Activated CD4-positive, alpha-beta T cell treated with anti-CD3 and anti-CD28 coated beads for 36 hours (primary cell): ENCODE measurements at regions of chr17 and their contacts with region 1.

Region 1: DNA sequence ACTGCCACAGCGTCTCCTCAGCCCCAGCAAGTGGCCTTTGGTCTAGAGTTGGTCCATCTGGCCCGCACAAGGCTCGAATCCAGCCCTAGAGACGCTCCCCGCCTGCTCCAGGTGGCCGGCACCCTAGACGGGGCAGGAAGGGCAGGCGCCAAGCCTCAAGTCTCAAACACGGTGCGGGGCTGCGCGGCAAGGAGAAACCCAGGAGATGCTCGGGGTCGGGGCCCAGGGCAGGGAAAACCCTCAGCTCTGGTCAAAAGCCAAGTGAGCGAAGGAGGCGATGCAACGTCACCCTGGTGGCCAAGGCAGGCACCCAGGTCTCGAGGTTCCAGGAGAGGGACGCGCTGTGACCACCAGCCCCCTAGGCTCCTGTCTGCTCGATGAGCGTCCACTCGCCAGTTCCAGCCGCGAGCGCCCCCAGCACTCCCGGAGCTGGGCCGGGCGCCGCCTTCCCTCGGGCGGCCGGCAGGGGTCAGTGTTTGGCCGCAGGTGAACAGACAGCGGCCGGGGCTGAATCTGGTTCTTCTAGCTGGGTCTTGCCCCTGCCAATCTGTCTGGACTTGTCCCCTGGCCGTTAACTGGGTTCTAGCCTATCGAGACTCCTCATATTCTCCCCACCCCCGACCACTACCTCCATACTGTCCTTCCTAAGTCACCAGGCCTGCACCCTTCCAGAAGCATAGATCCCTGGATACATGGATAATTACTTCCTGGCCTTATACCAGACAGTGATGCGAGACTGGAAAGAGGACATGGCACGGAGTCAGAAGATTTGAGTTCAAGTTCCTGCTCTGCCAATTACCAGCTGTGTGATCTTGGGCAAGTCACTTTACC is 44.0 kb downstream of the PRAC1 start:
- DNase-seq: peak; percentile 84
- ATAC-seq: peak; percentile 92
- H3K4me3 Mint-ChIP-seq: no peak overlapping the region
- H3K27ac Mint-ChIP-seq: no peak overlapping the region
- H3K4me1 Mint-ChIP-seq: no peaks in the 10 kb centered on the region
- H3K27me3 Mint-ChIP-seq: peaks cover 34% of the 10 kb centered on the region

Region 2: GRCh38 chr17:47970704-47971463 is 707.5 kb before region 1 on chr17 and contains the start of gene CDK5RAP3:
- CTCF ChIA-PET with region 1: no interaction called
- POLR2A ChIA-PET with region 1: no interaction called
- intact Hi-C with region 1: no loop called
- DNase-seq: peak; percentile 100
- ATAC-seq: peak; percentile 100
- H3K4me3 Mint-ChIP-seq: peak within 1 kb of the TSS; percentile 97
- H3K27ac Mint-ChIP-seq: peak within 1 kb of the TSS; percentile 94
- H3K4me1 Mint-ChIP-seq: peaks cover 21% of the 10 kb centered on the region
- H3K27me3 Mint-ChIP-seq: no peaks in the 10 kb centered on the region
- total RNA-seq, gene CDK5RAP3: 147 to 156 TPM

Region 3: DNA sequence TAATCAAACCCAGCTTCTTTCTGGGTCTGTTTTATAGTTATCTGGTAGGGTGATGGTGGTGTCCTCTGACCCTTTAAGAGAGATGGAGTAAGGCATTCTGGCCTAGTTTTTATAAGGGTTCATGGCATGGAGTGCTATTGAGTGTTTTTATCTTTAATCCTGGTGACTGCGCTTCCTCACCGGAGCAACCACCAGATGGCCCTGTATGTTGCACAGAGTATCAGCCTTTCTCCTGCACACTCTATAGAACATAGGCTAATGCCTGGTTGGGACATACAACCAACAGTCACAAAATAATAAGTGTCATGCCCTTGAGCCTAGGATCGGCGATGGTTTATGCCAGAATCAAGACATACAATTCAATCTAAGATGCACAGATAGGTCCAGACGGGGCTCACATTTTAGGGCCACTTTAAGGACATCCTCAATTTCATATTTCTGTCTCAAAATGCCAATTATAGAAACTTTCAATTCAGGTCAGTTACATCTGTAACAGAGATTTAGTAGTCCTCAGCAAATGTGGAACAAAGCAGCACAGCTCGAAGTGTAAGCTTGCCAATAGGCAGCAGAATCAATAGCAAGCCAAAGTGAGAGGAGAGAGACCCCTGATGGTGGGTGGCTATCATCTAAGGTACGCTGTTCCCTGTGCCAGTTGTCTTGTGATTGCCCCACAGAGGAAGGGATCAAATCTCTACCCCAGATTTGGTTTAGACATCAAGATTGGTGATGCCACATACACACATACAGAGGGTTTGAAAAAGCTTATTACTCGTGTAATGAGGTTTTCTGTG is 15.0 kb before region 1 on chr17:
- CTCF ChIA-PET with region 1: interaction called, 25 read pairs
- POLR2A ChIA-PET with region 1: no interaction called
- intact Hi-C with region 1: no loop called
- DNase-seq: no peak
- ATAC-seq: no peak
- H3K4me3 Mint-ChIP-seq: no peak overlapping the region
- H3K27ac Mint-ChIP-seq: no peak overlapping the region
- H3K4me1 Mint-ChIP-seq: no peaks in the 10 kb centered on the region
- H3K27me3 Mint-ChIP-seq: peaks cover 17% of the 10 kb centered on the region

Region 4: GRCh38 chr17:48704361-48705248 is 26.2 kb after region 1 on chr17:
- CTCF ChIA-PET with region 1: interaction called, 20 read pairs
- POLR2A ChIA-PET with region 1: interaction called, 3 read pairs
- intact Hi-C with region 1: no loop called
- DNase-seq: no peak
- ATAC-seq: no peak
- H3K4me3 Mint-ChIP-seq: no peak overlapping the region
- H3K27ac Mint-ChIP-seq: no peak overlapping the region
- H3K4me1 Mint-ChIP-seq: no peaks in the 10 kb centered on the region
- H3K27me3 Mint-ChIP-seq: peaks cover 49% of the 10 kb centered on the region

Region 5: DNA sequence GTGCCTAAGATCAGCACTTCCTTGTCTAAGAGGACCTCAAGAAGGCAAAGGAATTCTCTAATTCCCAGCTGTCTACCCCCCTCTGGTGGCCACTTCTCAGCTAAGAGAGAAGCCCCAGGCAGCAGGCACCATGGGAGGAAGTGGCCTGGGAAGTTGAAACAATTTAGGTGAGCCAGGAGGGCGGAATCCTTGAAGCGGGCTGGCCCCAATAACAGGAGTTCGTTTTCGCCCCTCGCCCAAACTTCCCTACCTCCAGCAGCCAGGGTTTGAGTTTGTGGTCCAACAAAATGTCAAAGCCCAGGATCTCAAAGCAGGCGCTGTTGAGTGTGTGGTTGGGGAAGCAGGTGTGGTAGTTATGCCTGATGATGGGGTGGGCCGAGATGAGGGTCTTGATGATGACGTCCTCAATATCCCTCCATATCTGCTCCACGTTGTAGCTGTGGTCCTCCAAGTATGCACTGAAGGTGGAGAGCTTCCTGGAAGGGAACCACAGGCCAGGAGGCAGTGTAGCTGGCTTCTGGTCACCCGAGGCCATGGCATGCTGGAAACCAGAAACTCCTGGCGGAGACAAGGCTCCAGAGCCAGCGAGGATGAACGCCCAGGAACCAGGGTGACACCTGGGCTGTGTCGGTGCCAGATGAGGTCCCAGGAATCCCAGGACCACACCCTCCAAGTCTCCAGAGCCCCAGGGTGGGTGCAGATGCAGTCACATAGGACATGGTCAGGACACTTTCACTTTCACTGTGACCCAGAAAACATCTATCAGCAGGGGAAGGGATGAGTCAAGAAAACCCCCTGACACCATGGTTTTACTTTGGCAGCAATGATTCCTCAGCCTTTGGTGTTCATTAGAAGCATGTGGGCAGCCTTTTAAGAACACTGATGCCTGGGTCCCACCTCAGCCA is 113.0 kb after region 1 on chr17:
- CTCF ChIA-PET with region 1: interaction called, 37 read pairs
- POLR2A ChIA-PET with region 1: no interaction called
- intact Hi-C with region 1: loop called (anchors 1 kb)
- DNase-seq: peak; percentile 46
- ATAC-seq: peak; percentile 84
- H3K4me3 Mint-ChIP-seq: no peak overlapping the region
- H3K27ac Mint-ChIP-seq: no peak overlapping the region
- H3K4me1 Mint-ChIP-seq: no peaks in the 10 kb centered on the region
- H3K27me3 Mint-ChIP-seq: peaks cover 30% of the 10 kb centered on the region

Region 6: GRCh38 chr17:48816774-48817590 is 138.6 kb after region 1 on chr17 and contains the start of gene TTLL6:
- CTCF ChIA-PET with region 1: interaction called, 30 read pairs
- POLR2A ChIA-PET with region 1: no interaction called
- intact Hi-C with region 1: no loop called
- DNase-seq: peak; percentile 80
- ATAC-seq: peak; percentile 93
- H3K4me3 Mint-ChIP-seq: peak within 1 kb of the TSS; percentile 63
- H3K27ac Mint-ChIP-seq: no peak within 1 kb of the TSS
- H3K4me1 Mint-ChIP-seq: peaks cover 15% of the 10 kb centered on the region
- H3K27me3 Mint-ChIP-seq: peaks cover 35% of the 10 kb centered on the region
- total RNA-seq, gene TTLL6: not detected

Region 7: GRCh38 chr17:49031965-49032928 is 353.9 kb after region 1 on chr17:
- CTCF ChIA-PET with region 1: interaction called, 18 read pairs
- POLR2A ChIA-PET with region 1: no interaction called
- intact Hi-C with region 1: loop called (anchors 1 to 10 kb)
- DNase-seq: peak; percentile 62
- ATAC-seq: peak; percentile 92
- H3K4me3 Mint-ChIP-seq: no peak overlapping the region
- H3K27ac Mint-ChIP-seq: no peak overlapping the region
- H3K4me1 Mint-ChIP-seq: no peaks in the 10 kb centered on the region
- H3K27me3 Mint-ChIP-seq: peaks cover 4% of the 10 kb centered on the region